ENCODE measurements at regions of chr12 and their contacts with region 1.

Region 1: GRCh38 chr12:52870351-52871290 is 21.8 kb upstream of the KRT78 start:
- DNase-seq: no peak
- ATAC-seq: peak; percentile 71
- H3K4me3 ChIP-seq: 0 out of 4 replicates have a peak overlapping the region, but pooled peaks of 1 of the 2 experiments have one; percentile 16
- H3K27ac ChIP-seq: peak overlapping the region; percentile 81
- H3K4me1 ChIP-seq: peaks cover 48 to 64% of the 10 kb centered on the region in 2 experiments
- H3K27me3 ChIP-seq: no peaks in the 10 kb centered on the region
- CTCF ChIP-seq: peak in 2 of 3 experiments; percentile 89 to 96; a peak in 4 of 6 replicates
- POLR2A ChIP-seq: no peak
- RAD21 ChIP-seq: no peak

Region 2: DNA sequence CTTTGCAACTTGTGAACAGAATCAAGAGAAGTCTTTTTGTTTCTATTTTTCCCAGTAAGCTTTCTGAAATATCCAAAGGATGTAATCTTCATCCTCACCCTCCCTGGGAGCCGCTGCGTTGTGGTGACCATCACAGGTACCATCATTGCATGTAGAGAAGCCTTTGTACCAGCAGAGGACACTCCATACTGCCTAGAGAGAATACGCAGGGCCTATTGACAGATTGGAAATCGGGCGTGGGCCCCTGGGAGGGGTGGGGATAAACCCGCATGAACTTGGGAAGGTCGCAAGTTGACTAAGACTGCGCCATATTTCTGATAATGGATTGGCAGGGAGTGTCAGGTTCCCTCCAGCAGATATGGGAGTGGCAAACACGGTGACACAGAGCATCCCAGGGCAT is 203.1 kb before region 1 on chr12:
- CTCF ChIA-PET with region 1: interaction called, 10 read pairs
- POLR2A ChIA-PET with region 1: interaction called, 3 read pairs
- RAD21 ChIA-PET with region 1: no interaction called
- intact Hi-C with region 1: loop called (anchors 2 kb)
- DNase-seq: no peak
- ATAC-seq: peak; percentile 62
- H3K4me3 ChIP-seq: no peak overlapping the region
- H3K27ac ChIP-seq: no peak overlapping the region
- H3K4me1 ChIP-seq: peaks cover 0 to 17% of the 10 kb centered on the region in 2 experiments; a peak in 2 of 4 replicates
- H3K27me3 ChIP-seq: no peaks in the 10 kb centered on the region
- CTCF ChIP-seq: peak; percentile 46 to 62 (median 60); a peak in 4 of 6 replicates
- POLR2A ChIP-seq: no peak
- RAD21 ChIP-seq: peak; percentile 68

Region 3: DNA sequence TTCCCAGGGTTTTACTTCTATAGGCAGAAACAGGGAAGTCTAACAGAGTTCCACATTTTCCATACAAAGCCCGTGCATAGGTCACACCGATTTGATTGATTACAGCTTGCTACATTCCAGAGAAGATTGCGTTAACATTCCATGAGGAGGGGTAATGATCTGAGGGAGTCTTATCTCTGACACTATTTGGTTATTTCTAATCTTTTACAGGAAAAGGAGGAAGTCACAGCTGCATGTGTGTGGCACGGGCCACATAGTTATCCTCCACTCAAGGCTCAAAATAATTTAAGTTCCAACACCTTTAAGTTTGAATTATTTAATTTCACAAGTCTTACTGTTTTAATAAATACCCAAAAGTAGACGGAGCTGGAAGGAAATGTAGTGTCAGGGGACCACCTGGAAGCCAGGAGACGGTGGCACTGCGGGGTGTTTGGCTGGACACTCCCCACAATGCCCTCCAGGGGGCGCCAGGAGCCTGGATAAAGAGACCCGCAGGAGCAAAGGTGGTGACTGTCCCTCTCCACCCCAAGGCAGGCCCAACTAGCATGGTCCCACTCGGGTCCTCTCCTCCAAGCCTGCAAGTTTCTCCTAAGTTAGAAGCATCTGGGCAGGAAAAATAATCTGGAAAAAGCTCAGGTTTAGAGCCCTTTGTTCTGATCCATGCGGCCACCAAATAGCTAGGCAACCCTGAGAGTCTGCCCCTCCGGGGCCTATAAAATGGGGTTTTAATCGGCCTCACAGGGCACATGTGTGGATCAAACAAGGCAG is 14.1 kb after region 1 on chr12:
- CTCF ChIA-PET with region 1: interaction called, 27 read pairs
- POLR2A ChIA-PET with region 1: no interaction called
- RAD21 ChIA-PET with region 1: interaction called in 1 of 2 experiments, 5 read pairs
- intact Hi-C with region 1: no loop called
- DNase-seq: no peak
- ATAC-seq: peak; percentile 85
- H3K4me3 ChIP-seq: no peak overlapping the region
- H3K27ac ChIP-seq: no peak overlapping the region
- H3K4me1 ChIP-seq: peaks cover 16 to 35% of the 10 kb centered on the region in 2 experiments; a peak in 3 of 4 replicates
- H3K27me3 ChIP-seq: no peaks in the 10 kb centered on the region
- CTCF ChIP-seq: peak; percentile 87 to 99 (median 97)
- POLR2A ChIP-seq: no peak
- RAD21 ChIP-seq: peak; percentile 100